Endothelial cell of umbilical vein (primary cell): ENCODE measurements at regions of chr9 and their contacts with region 1.

Region 1: GRCh38 chr9:136625101-136626060 is 37.3 kb upstream of the EGFL7 start:
- DNase-seq: peak; percentile 86
- H3K4me3 ChIP-seq: no peak overlapping the region
- H3K27ac ChIP-seq: no peak overlapping the region
- H3K4me1 ChIP-seq: peaks cover 12% of the 10 kb centered on the region
- H3K27me3 ChIP-seq: no peaks in the 10 kb centered on the region
- CTCF ChIP-seq: peak; percentile 39 to 66
- POLR2A ChIP-seq: no peak

Region 2: DNA sequence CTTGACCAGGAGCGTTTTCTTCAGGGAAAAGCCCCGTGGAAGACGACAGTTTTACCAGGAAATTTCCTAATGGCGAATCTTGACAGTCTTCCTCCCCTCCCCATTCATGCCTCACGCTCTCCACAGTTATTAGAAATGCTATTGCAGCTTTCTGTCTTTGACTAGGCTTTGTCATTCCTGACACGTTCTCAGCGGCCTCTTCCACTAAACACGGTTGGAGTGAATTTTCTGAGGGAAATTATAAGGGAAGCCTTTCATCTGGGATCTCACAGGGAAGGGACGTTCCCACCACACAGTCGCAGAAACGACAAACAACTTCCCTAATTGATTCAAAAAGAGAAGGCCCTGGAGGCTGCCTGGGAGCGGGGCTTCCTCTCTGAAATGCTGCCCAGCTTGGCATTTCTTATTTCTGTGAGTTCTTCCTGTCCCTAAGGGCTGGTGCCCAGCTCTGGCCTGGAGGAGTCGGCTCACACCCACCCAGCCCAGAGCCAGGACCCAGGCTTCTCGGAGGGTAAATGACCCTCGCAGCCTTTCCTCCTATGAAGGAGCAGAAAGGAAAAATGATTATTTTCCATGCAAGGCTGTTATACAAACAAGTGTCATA is 1202.9 kb before region 1 on chr9:
- CTCF ChIA-PET with region 1: no interaction called
- POLR2A ChIA-PET with region 1: no interaction called
- dilution Hi-C with region 1: no loop called
- intact Hi-C with region 1: no loop called
- DNase-seq: no peak
- H3K4me3 ChIP-seq: no peak overlapping the region
- H3K27ac ChIP-seq: no peak overlapping the region
- H3K4me1 ChIP-seq: no peaks in the 10 kb centered on the region
- H3K27me3 ChIP-seq: no peaks in the 10 kb centered on the region
- CTCF ChIP-seq: no peak
- POLR2A ChIP-seq: no peak

Region 3: DNA sequence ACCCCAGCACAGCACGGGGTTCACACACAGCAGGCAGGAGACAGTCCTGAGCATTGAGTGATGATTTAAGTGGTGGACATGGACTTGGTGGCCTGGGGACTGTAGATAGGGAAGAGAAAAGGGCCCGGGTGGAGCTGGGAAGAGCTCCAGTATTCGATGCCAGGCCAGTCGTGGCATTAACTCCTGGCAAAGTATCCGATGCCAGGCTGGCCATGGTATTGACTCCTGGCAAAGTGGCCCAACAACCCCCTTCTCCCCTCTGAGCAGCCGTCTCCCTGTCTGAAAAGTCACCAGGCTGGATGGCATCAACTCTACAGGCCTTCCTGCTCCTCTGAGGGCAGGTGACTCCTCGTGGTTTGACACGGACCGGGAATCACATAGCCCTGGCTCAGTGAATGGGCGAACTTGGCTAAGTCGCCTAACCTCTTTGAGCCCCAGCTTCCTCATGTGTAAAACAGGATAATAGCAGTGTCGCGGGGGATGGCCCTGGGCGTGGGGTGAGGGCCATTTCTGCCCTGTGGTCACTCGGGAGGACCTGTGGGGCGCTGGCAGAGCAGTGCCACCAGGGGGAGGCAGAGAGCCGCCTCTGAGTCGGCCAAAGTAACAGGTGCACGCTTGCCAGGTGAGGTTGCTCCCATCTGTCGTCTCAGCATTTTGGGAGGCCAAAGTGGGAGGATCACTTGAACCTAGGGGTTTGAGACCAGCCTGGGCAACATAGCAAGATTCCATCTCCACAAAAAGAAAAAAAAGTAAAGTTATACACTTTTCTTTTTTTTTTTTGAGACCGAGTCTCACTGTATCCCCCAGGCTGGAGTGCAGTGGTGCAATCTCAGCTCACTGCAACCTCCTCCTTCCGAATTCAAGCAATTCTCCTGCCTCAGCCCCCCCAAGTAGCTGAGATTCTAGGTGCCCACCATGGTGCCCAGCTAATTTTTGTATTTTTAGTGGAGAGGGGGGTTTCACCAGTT is 136.8 kb before region 1 on chr9:
- CTCF ChIA-PET with region 1: interaction called, 261 read pairs
- POLR2A ChIA-PET with region 1: interaction called, 5 read pairs
- dilution Hi-C with region 1: no loop called
- intact Hi-C with region 1: loop called (anchors 1 kb)
- DNase-seq: peak; percentile 54
- H3K4me3 ChIP-seq: no peak overlapping the region
- H3K27ac ChIP-seq: no peak overlapping the region
- H3K4me1 ChIP-seq: peaks cover 8% of the 10 kb centered on the region
- H3K27me3 ChIP-seq: no peaks in the 10 kb centered on the region
- CTCF ChIP-seq: peak; percentile 88 to 97
- POLR2A ChIP-seq: no peak

Region 4: GRCh38 chr9:136545966-136546698 is 79.2 kb before region 1 on chr9 and contains the start of gene NOTCH1:
- CTCF ChIA-PET with region 1: interaction called, 59 read pairs
- POLR2A ChIA-PET with region 1: interaction called, 4 read pairs
- dilution Hi-C with region 1: no loop called
- intact Hi-C with region 1: loop called (anchors 1 kb)
- DNase-seq: peak; percentile 88
- H3K4me3 ChIP-seq: peak within 1 kb of the TSS; percentile 81 to 98 (median 91)
- H3K27ac ChIP-seq: peak within 1 kb of the TSS; percentile 68
- H3K4me1 ChIP-seq: peaks cover 45% of the 10 kb centered on the region
- H3K27me3 ChIP-seq: no peaks in the 10 kb centered on the region
- CTCF ChIP-seq: no peak
- POLR2A ChIP-seq: peak; percentile 6
- total RNA-seq, gene NOTCH1: 153 and 161 TPM in 2 replicates

Region 5: GRCh38 chr9:136605988-136606660 is 19.3 kb before region 1 on chr9:
- CTCF ChIA-PET with region 1: interaction called, 13 read pairs
- POLR2A ChIA-PET with region 1: no interaction called
- dilution Hi-C with region 1: no loop called
- intact Hi-C with region 1: no loop called
- DNase-seq: no peak
- H3K4me3 ChIP-seq: no peak overlapping the region
- H3K27ac ChIP-seq: no peak overlapping the region
- H3K4me1 ChIP-seq: peaks cover 5% of the 10 kb centered on the region
- H3K27me3 ChIP-seq: no peaks in the 10 kb centered on the region
- CTCF ChIP-seq: no peak
- POLR2A ChIP-seq: no peak

Region 6: GRCh38 chr9:136644598-136645351 is 19.4 kb after region 1 on chr9:
- CTCF ChIA-PET with region 1: interaction called, 12 read pairs
- POLR2A ChIA-PET with region 1: no interaction called
- dilution Hi-C with region 1: no loop called
- intact Hi-C with region 1: no loop called
- DNase-seq: peak; percentile 88
- H3K4me3 ChIP-seq: peak overlapping the region in 1 of 3 experiments; percentile 47
- H3K27ac ChIP-seq: peak overlapping the region; percentile 98
- H3K4me1 ChIP-seq: peaks cover 72% of the 10 kb centered on the region
- H3K27me3 ChIP-seq: no peaks in the 10 kb centered on the region
- CTCF ChIP-seq: peak; percentile 95 to 96
- POLR2A ChIP-seq: peak; percentile 72

Region 7: GRCh38 chr9:136694236-136694942 is 69.0 kb after region 1 on chr9:
- CTCF ChIA-PET with region 1: no interaction called
- POLR2A ChIA-PET with region 1: no interaction called
- dilution Hi-C with region 1: no loop called
- intact Hi-C with region 1: no loop called
- DNase-seq: peak; percentile 61
- H3K4me3 ChIP-seq: no peak overlapping the region
- H3K27ac ChIP-seq: no peak overlapping the region
- H3K4me1 ChIP-seq: peaks cover 6% of the 10 kb centered on the region
- H3K27me3 ChIP-seq: no peaks in the 10 kb centered on the region
- CTCF ChIP-seq: peak; percentile 75 to 89
- POLR2A ChIP-seq: no peak